AG04449 (cell line): ENCODE measurements at regions of chr13 and their contacts with region 1.

Region 1: GRCh38 chr13:46622630-46623256 is 69.8 kb downstream of the LRCH1 start:
- DNase-seq: peak; percentile 60
- H3K4me3 ChIP-seq: no peak overlapping the region
- CTCF ChIP-seq: no peak

Region 2: GRCh38 chr13:45584816-45585215 is 1037.9 kb before region 1 on chr13:
- CTCF ChIA-PET with region 1: no interaction called
- POLR2A ChIA-PET with region 1: no interaction called
- DNase-seq: no peak
- H3K4me3 ChIP-seq: no peak overlapping the region
- CTCF ChIP-seq: no peak

Region 3: DNA sequence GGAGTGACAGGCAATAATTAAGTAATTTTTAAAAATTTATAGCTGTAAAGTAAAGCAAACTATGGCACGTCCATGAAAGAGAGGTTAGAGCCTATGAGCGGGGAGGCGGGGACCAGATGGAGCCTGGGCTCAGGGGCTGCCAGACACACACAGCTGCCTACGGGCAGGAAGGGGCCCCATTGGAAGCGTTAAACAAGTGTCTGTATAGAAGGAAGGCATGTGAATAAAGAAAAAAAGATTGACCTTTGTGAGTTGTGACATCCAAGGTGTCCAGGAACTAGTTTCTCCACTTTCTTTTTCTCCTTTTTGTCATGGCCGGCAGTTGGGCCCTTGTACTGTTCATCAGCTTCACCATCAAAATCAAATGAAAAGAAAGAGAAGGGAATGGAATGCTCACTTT is 13.0 kb before region 1 on chr13:
- CTCF ChIA-PET with region 1: interaction called, 15 read pairs
- POLR2A ChIA-PET with region 1: interaction called, 4 read pairs
- DNase-seq: no peak
- H3K4me3 ChIP-seq: no peak overlapping the region
- CTCF ChIP-seq: no peak